Heart left ventricle (tissue), 16 donors: ENCODE measurements at regions of chr21 and their contacts with region 1.

Region 1: GRCh38 chr21:41816220-41817165 is 49.6 kb upstream of the RIPK4 start:
- DNase-seq: peak; percentile 48 to 83 (median 66)
- ATAC-seq: peak in 3 of 4 donors; percentile 68 to 91 (median 82)
- H3K4me3 ChIP-seq: no peak overlapping the region
- H3K27ac ChIP-seq: no peak overlapping the region
- H3K4me1 ChIP-seq: peaks cover 0 to 9% (median 0%) of the 10 kb centered on the region in 12 donors
- H3K27me3 ChIP-seq: no peaks in the 10 kb centered on the region
- CTCF ChIP-seq: peak; percentile 72 to 88 (median 80)
- POLR2A ChIP-seq: no peak

Region 2: GRCh38 chr21:41601573-41602368 is 214.7 kb before region 1 on chr21:
- intact Hi-C with region 1: no loop called
- DNase-seq: no peak
- ATAC-seq: no peak
- H3K4me3 ChIP-seq: no peak overlapping the region
- H3K27ac ChIP-seq: no peak overlapping the region
- H3K4me1 ChIP-seq: peaks cover 0 to 4% (median 0%) of the 10 kb centered on the region in 12 donors
- H3K27me3 ChIP-seq: peaks cover 0 to 17% (median 0%) of the 10 kb centered on the region in 9 donors
- CTCF ChIP-seq: no peak
- POLR2A ChIP-seq: no peak

Region 3: GRCh38 chr21:41612674-41613532 is 203.6 kb before region 1 on chr21:
- intact Hi-C with region 1: loop called in 2 of 10 experiments (anchors 2 to 5 kb)
- DNase-seq: peak; percentile 65 to 80 (median 74)
- ATAC-seq: peak; percentile 80 to 91 (median 88)
- H3K4me3 ChIP-seq: no peak overlapping the region
- H3K27ac ChIP-seq: peak overlapping the region in 4 of 12 donors; percentile 27 to 66 (median 48)
- H3K4me1 ChIP-seq: peaks cover 0 to 26% (median 8%) of the 10 kb centered on the region in 12 donors
- H3K27me3 ChIP-seq: peaks cover 0 to 31% (median 9%) of the 10 kb centered on the region in 9 donors
- CTCF ChIP-seq: peak; percentile 57 to 82 (median 76)
- POLR2A ChIP-seq: no peak

Region 4: DNA sequence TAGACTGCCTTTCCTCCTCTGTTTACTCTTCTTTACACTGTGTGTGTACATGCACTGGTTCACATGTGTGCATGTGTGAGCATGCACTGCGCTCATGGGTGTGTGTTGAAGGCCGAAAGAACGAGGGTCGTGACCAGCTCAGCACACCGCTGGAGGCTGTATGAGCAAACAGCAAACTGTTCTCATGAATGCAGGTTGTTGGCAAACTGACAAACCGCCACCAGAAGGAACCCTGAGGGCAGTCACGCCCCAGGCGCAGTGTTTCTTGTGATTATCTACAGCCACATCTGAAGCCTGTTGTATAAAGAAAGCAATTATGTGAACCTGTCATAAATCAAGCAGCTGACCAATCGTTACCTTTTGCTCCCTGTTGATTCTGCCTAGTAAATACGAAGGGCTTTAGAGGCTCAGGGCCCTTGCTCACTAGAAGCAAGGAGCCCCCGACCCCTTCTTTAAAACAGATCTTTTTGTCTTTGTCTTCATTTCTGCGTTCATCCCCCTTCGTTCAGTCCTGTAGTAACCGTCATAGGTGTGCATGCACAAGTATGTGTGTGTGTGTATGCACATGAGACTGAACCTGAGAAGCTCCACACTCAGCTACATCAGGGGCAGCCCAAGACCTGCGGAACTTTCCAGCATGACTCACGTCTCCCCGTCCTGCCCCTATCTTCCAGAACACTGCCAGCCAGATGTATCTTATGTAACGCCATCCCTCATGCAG is 32.9 kb before region 1 on chr21:
- intact Hi-C with region 1: no loop called
- DNase-seq: no peak
- ATAC-seq: no peak
- H3K4me3 ChIP-seq: no peak overlapping the region
- H3K27ac ChIP-seq: no peak overlapping the region
- H3K4me1 ChIP-seq: peaks cover 0 to 6% (median 0%) of the 10 kb centered on the region in 12 donors
- H3K27me3 ChIP-seq: peaks cover 4 to 76% (median 34%) of the 10 kb centered on the region in 9 donors
- CTCF ChIP-seq: no peak
- POLR2A ChIP-seq: no peak